ENCODE measurements at regions of chr12 and their contacts with region 1.

Region 1: DNA sequence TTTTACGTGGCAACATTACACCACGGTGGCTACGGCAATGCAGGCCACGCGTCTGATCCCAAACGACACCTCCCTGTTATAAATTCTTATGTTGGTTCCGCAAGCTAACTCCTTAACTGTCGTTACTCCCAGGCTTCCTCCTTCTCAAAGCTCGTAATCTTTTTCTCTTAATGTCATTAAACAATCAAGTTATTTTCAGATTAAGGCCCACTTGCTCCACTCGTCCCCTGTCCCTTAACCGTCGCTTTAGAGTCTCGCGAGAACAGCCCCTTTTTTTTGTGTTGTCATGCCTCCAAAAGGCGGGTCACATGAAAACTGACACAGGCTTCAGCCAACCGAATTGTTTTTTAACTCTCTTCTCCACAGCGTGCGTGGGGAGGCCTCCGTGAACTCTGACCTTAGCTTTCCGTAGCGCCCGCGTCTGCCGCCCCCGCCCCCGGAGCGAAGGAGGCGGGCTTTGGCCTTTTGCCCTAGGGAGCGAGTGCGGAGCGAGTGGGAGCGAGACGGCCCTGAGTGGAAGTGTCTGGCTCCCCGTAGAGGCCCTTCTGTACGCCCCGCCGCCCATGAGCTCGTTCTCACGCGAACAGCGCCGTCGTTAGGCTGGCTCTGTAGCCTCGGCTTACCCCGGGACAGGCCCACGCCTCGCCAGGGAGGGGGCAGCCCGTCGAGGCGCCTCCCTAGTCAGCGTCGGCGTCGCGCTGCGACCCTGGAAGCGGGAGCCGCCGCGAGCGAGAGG is at the start of gene CAND1:
- DNase-seq: peak; percentile 89 to 99 (median 95)
- ATAC-seq: peak; percentile 78
- H3K4me3 ChIP-seq: peak within 1 kb of the TSS; percentile 88 to 92
- H3K4me3 Mint-ChIP-seq: peak within 1 kb of the TSS; percentile 88
- H3K27ac ChIP-seq: peak within 1 kb of the TSS; percentile 68 to 97
- H3K27ac Mint-ChIP-seq: peak within 1 kb of the TSS; percentile 99
- H3K4me1 ChIP-seq: peaks cover 33% of the 10 kb centered on the region
- H3K4me1 Mint-ChIP-seq: peaks cover 48% of the 10 kb centered on the region
- H3K27me3 ChIP-seq: no peaks in the 10 kb centered on the region
- H3K27me3 Mint-ChIP-seq: no peaks in the 10 kb centered on the region
- CTCF ChIP-seq: no peak
- total RNA-seq, gene CAND1: 116 to 130 TPM

Region 2: DNA sequence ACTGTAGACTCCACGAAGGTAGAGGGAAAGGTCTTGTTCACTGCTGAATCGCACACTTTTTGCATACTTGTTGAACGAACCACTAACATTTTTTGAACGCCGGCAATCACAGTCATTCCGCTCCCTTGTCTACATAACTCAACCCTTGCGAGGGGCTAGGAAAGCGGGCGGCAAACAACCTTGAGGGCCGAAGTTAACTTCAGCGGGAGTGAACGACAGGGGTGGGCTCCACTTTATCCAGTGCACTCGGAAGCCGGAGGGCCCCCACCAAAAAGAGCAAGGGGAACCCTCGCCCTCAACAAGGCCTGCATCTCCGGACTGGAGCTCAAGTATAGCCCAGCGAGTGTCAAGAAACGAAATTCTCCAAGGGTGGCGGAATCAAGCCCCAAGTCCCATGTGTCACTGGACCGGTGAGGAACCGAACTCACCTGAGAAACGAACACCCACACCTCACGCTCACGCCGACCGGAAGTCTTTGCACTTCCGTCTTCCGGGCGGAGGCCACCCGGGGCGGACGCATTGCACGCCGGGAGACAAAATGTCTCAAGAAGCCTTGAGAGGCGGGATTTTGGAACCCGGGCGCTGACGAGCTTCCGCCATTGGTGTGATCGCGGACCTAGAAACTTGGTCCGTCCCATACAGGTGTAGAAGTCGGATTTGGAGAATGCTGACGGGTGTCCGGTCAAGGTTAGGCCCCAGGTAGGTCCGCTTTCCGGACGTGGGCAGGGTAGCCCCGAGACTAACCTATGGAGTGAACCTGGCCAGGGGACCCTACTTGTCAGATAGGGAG is 1138.6 kb before region 1 on chr12 and contains the start of gene LLPH:
- CTCF ChIA-PET with region 1: no interaction called
- POLR2A ChIA-PET with region 1: interaction called, 9 read pairs
- intact Hi-C with region 1: loop called in 1 of 2 experiments (anchors 2 kb)
- DNase-seq: peak; percentile 75 to 94 (median 89)
- ATAC-seq: peak; percentile 92
- H3K4me3 ChIP-seq: peak within 1 kb of the TSS; percentile 91 to 97
- H3K4me3 Mint-ChIP-seq: peak within 1 kb of the TSS; percentile 96
- H3K27ac ChIP-seq: peak within 1 kb of the TSS; percentile 86 to 91
- H3K27ac Mint-ChIP-seq: peak within 1 kb of the TSS; percentile 99
- H3K4me1 ChIP-seq: peaks cover 22% of the 10 kb centered on the region
- H3K4me1 Mint-ChIP-seq: peaks cover 59% of the 10 kb centered on the region
- H3K27me3 ChIP-seq: no peaks in the 10 kb centered on the region
- H3K27me3 Mint-ChIP-seq: no peaks in the 10 kb centered on the region
- CTCF ChIP-seq: no peak
- total RNA-seq, gene LLPH: 29.1 to 30.9 TPM

Region 3: GRCh38 chr12:66288121-66288520 is 980.9 kb before region 1 on chr12:
- CTCF ChIA-PET with region 1: no interaction called
- POLR2A ChIA-PET with region 1: no interaction called
- intact Hi-C with region 1: loop called in 1 of 2 experiments (anchors 2 kb)
- DNase-seq: peak in 8 of 9 experiments; percentile 38 to 91 (median 68)
- ATAC-seq: peak; percentile 98
- H3K4me3 ChIP-seq: peak overlapping the region in 1 of 2 experiments; percentile 33
- H3K4me3 Mint-ChIP-seq: peak overlapping the region; percentile 72
- H3K27ac ChIP-seq: peak overlapping the region in 1 of 2 experiments; percentile 9
- H3K27ac Mint-ChIP-seq: peak overlapping the region; percentile 83
- H3K4me1 ChIP-seq: peaks cover 77% of the 10 kb centered on the region
- H3K4me1 Mint-ChIP-seq: peaks cover 80% of the 10 kb centered on the region
- H3K27me3 ChIP-seq: no peaks in the 10 kb centered on the region
- H3K27me3 Mint-ChIP-seq: no peaks in the 10 kb centered on the region
- CTCF ChIP-seq: no peak

Region 4: DNA sequence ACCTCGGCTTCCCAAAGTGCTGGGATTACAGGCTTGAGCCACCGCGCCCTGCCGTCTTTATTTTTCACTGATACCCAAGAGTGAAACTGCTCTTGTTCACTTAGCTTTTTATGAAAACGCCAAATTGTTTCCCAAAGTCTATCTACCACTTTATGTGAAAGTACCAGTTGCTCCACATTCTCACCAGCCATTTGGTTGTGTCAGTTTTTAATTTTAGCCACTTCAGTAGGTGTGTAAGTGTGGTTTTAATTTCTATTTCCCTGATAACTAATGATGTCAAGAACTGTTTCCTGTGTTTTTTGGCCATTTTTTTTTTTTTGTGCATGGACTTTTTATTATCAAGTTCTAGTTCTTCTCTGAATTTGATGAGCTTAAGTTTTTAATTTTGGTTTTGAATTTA is 17.2 kb after region 1 on chr12:
- CTCF ChIA-PET with region 1: no interaction called
- POLR2A ChIA-PET with region 1: interaction called, 12 read pairs
- intact Hi-C with region 1: loop called in 1 of 2 experiments (anchors 2 kb)
- DNase-seq: peak in 1 of 9 experiments; percentile 27
- ATAC-seq: no peak
- H3K4me3 ChIP-seq: no peak overlapping the region
- H3K4me3 Mint-ChIP-seq: no peak overlapping the region
- H3K27ac ChIP-seq: no peak overlapping the region
- H3K27ac Mint-ChIP-seq: no peak overlapping the region
- H3K4me1 ChIP-seq: peaks cover 22% of the 10 kb centered on the region
- H3K4me1 Mint-ChIP-seq: peaks cover 64% of the 10 kb centered on the region
- H3K27me3 ChIP-seq: no peaks in the 10 kb centered on the region
- H3K27me3 Mint-ChIP-seq: no peaks in the 10 kb centered on the region
- CTCF ChIP-seq: no peak

Region 5: DNA sequence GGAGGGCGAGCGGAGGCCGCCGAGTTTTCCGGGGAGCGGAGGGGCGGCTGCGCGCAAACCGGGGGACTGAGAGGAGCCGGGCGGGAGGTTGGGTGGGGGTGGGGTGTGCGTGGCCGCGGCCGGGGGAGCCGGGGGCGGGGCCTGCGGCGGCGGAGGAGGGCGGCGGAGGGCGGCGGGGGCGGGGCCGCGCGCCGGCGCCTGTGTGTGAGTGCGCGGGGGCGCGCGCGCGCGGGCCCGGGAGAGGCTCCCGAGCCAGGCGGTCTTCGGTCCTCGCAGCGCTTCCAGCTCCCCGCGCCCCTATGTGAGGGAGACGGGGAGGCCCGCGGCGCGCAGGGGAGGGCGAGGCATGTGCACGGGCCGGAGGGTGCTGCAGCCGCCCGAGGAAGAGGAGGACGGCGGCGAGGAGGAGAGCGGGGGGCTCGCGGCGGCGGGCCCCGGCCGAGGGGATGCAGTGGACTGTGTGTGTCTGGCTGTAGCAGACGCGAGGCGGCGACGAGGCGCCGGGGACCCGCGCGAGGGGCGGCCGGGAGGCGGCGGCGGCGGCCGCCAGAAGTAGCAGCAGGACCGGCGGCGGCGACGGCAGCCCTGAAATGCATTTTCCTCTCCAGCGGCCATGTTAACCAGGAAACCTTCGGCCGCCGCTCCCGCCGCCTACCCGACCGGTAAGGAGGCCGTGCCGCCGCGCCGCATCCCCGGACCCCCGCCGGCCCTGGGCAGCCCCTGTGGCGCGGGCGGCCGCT is 379.6 kb after region 1 on chr12 and contains the start of gene DYRK2:
- CTCF ChIA-PET with region 1: no interaction called
- POLR2A ChIA-PET with region 1: interaction called, 3 read pairs
- intact Hi-C with region 1: loop called (anchors 2 kb)
- DNase-seq: peak; percentile 58 to 91 (median 78)
- ATAC-seq: peak; percentile 54
- H3K4me3 ChIP-seq: peak within 1 kb of the TSS; percentile 85 to 88
- H3K4me3 Mint-ChIP-seq: peak within 1 kb of the TSS; percentile 98
- H3K27ac ChIP-seq: peak within 1 kb of the TSS; percentile 79 to 82
- H3K27ac Mint-ChIP-seq: peak within 1 kb of the TSS; percentile 98
- H3K4me1 ChIP-seq: peaks cover 28% of the 10 kb centered on the region
- H3K4me1 Mint-ChIP-seq: peaks cover 42% of the 10 kb centered on the region
- H3K27me3 ChIP-seq: no peaks in the 10 kb centered on the region
- H3K27me3 Mint-ChIP-seq: no peaks in the 10 kb centered on the region
- CTCF ChIP-seq: no peak
- total RNA-seq, gene DYRK2: 118 to 122 TPM

Region 6: GRCh38 chr12:68686595-68687521 is 1417.8 kb after region 1 on chr12 and contains the start of gene NUP107:
- CTCF ChIA-PET with region 1: no interaction called
- POLR2A ChIA-PET with region 1: no interaction called
- intact Hi-C with region 1: loop called (anchors 2 to 5 kb)
- DNase-seq: peak; percentile 95 to 99 (median 98)
- ATAC-seq: peak; percentile 96
- H3K4me3 ChIP-seq: peak within 1 kb of the TSS; percentile 91
- H3K4me3 Mint-ChIP-seq: peak within 1 kb of the TSS; percentile 99
- H3K27ac ChIP-seq: peak within 1 kb of the TSS; percentile 73 to 78
- H3K27ac Mint-ChIP-seq: peak within 1 kb of the TSS; percentile 100
- H3K4me1 ChIP-seq: peaks cover 24% of the 10 kb centered on the region
- H3K4me1 Mint-ChIP-seq: peaks cover 41% of the 10 kb centered on the region
- H3K27me3 ChIP-seq: no peaks in the 10 kb centered on the region
- H3K27me3 Mint-ChIP-seq: no peaks in the 10 kb centered on the region
- CTCF ChIP-seq: no peak
- total RNA-seq, gene NUP107: 40.1 to 45.9 TPM

Region 7: GRCh38 chr12:69239352-69239921 is 1970.4 kb after region 1 on chr12 and contains the start of gene CPSF6:
- CTCF ChIA-PET with region 1: no interaction called
- POLR2A ChIA-PET with region 1: no interaction called
- intact Hi-C with region 1: loop called in 1 of 2 experiments (anchors 5 kb)
- DNase-seq: peak; percentile 94 to 99 (median 96)
- ATAC-seq: peak; percentile 88
- H3K4me3 ChIP-seq: peak within 1 kb of the TSS; percentile 84 to 95
- H3K4me3 Mint-ChIP-seq: peak within 1 kb of the TSS; percentile 95
- H3K27ac ChIP-seq: peak within 1 kb of the TSS; percentile 68 to 89
- H3K27ac Mint-ChIP-seq: peak within 1 kb of the TSS; percentile 99
- H3K4me1 ChIP-seq: peaks cover 36% of the 10 kb centered on the region
- H3K4me1 Mint-ChIP-seq: peaks cover 51% of the 10 kb centered on the region
- H3K27me3 ChIP-seq: no peaks in the 10 kb centered on the region
- H3K27me3 Mint-ChIP-seq: no peaks in the 10 kb centered on the region
- CTCF ChIP-seq: no peak
- total RNA-seq, gene CPSF6: 78.9 to 81.3 TPM